ENCODE measurements at regions of chr10 and their contacts with region 1.

Region 1: DNA sequence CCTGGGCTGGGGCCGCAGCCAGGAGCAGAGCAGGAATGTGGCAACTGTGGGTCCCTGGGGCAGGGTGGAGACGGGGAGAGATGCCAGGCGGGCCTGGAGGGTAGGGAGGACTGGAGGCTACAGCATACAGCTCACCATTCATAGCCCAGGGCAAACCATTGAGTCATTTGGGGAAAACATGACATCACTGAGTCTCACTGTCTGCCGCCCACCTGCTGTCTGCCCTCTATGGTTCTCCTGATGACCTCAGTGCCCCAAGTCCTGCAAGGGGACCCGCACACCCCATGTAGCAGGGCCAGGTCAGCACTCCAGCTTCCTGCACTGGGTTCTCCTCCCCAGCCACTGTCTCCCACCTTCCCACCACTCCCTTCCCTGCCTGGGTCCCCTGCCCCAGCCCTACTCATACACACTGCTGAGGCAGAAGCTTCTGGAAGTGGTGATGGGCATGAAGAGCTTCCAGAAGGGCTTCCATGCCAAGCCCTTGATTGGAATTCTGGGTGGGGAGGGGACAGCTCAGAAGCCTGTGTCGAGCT is 10.4 kb downstream of the CHST3 start:
- DNase-seq: peak; percentile 81
- H3K4me3 Mint-ChIP-seq: peak overlapping the region; percentile 77
- H3K27ac Mint-ChIP-seq: peak overlapping the region; percentile 78
- H3K4me1 Mint-ChIP-seq: peaks cover 75% of the 10 kb centered on the region
- H3K27me3 Mint-ChIP-seq: no peaks in the 10 kb centered on the region
- CTCF ChIP-seq: no peak

Region 2: DNA sequence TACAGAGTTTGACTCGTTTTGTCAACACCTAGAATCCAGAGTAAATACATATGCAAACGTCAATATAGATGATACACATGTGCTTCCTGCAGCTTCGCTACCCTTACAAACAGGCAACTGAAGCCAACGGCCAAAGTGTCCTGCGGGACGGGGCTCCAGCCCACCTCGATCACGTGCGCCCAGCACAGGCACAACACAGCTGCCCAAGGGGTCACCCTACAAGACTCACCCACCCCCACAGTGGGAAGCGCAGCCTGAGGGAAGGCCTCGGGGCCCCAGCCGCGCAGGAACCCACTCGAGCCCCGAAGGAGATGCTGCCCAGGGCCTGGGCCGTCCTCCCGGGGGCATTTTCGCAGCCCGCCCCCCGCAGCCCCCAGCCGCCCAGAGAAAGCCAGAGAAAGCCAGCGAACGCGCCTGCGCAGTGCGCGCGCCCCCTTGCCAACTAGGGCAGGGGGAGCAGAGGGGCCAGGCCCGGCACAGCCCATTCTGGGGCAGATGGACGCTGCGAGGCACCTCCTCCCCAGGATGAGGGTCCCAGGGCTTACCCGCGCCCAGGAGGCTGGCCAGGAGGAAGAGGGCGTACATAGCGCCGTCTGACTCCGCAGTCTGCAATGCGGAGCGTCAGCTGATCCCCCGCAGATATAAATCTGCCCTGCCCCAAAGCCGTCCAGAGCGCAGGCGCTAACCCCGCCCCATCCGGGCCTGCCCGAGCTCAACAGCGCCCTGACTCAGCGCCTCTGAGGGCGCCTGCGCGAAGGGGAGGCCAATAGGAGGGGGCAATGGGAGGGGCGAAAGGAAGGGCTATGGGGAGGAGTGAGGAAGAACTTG is 123.7 kb before region 1 on chr10 and contains the start of gene PSAP:
- CTCF ChIA-PET with region 1: no interaction called
- POLR2A ChIA-PET with region 1: interaction called, 14 read pairs
- intact Hi-C with region 1: no loop called
- DNase-seq: peak; percentile 99
- H3K4me3 Mint-ChIP-seq: peak within 1 kb of the TSS; percentile 80
- H3K27ac Mint-ChIP-seq: peak within 1 kb of the TSS; percentile 94
- H3K4me1 Mint-ChIP-seq: peaks cover 42% of the 10 kb centered on the region
- H3K27me3 Mint-ChIP-seq: no peaks in the 10 kb centered on the region
- CTCF ChIP-seq: no peak
- total RNA-seq, gene PSAP: 506 and 692 TPM in 2 replicates

Region 3: GRCh38 chr10:71957546-71958275 is 16.8 kb before region 1 on chr10:
- CTCF ChIA-PET with region 1: interaction called, 21 read pairs
- POLR2A ChIA-PET with region 1: interaction called, 24 read pairs
- intact Hi-C with region 1: no loop called
- DNase-seq: no peak
- H3K4me3 Mint-ChIP-seq: no peak overlapping the region
- H3K27ac Mint-ChIP-seq: no peak overlapping the region
- H3K4me1 Mint-ChIP-seq: peaks cover 10% of the 10 kb centered on the region
- H3K27me3 Mint-ChIP-seq: no peaks in the 10 kb centered on the region
- CTCF ChIP-seq: no peak

Region 4: DNA sequence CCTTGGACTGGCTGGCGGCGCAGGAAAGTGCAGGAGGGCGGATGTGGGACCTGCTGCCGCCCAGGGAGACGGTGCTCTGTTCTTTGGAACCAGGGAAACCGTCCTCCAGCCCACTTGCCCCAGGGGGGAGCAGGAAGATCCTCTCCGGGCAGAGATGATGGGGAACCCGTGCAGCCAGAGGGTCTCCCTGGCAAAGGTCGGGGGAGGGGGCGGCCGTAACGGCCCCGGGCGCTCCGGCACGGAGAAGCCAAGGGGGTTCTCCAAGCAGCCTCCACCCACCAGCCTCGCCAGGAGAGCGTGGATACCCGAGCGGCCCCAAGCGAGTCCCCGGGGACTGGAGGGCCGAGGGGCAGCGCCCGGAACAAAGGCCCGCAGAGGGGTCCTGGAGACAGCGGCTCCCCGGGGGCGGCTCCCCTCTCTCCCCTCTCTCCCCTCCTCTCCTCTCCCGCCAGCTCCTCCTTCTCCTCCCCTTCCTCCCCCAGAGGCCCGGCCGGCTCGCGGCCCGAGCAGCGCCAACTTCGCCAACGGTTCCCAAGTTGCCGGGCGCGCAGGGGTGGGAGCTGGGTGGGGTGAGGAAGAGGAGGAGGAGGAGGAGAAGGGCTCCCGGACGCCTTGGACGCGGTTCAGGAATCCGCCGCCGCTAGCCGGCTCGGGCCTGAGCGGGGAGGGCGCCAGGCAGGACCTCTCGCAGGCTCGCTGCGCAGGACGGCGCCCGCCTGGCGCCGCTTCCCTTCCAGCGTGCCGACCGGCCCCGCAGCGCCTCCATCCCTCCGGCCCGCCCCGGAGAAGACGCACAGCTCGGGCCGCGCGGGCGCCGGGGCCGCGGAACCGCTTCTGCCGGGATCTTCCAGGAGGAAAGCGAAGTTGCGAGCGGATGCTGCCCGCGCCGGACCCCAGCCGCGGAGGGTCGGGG is 10.5 kb before region 1 on chr10 and contains the start of gene CHST3:
- CTCF ChIA-PET with region 1: interaction called, 4 read pairs
- POLR2A ChIA-PET with region 1: interaction called, 64 read pairs
- intact Hi-C with region 1: no loop called
- DNase-seq: peak; percentile 55
- H3K4me3 Mint-ChIP-seq: peak within 1 kb of the TSS; percentile 83
- H3K27ac Mint-ChIP-seq: peak within 1 kb of the TSS; percentile 81
- H3K4me1 Mint-ChIP-seq: peaks cover 33% of the 10 kb centered on the region
- H3K27me3 Mint-ChIP-seq: no peaks in the 10 kb centered on the region
- CTCF ChIP-seq: no peak
- total RNA-seq, gene CHST3: 28.7 and 29.3 TPM in 2 replicates

Region 5: GRCh38 chr10:71985542-71986250 is 11.1 kb after region 1 on chr10:
- CTCF ChIA-PET with region 1: interaction called, 3 read pairs
- POLR2A ChIA-PET with region 1: interaction called, 21 read pairs
- intact Hi-C with region 1: no loop called
- DNase-seq: no peak
- H3K4me3 Mint-ChIP-seq: no peak overlapping the region
- H3K27ac Mint-ChIP-seq: peak overlapping the region; percentile 65
- H3K4me1 Mint-ChIP-seq: peaks cover 40% of the 10 kb centered on the region
- H3K27me3 Mint-ChIP-seq: no peaks in the 10 kb centered on the region
- CTCF ChIP-seq: no peak

Region 6: GRCh38 chr10:71999360-72000072 is 25.0 kb after region 1 on chr10:
- CTCF ChIA-PET with region 1: interaction called, 6 read pairs
- POLR2A ChIA-PET with region 1: interaction called, 28 read pairs
- intact Hi-C with region 1: no loop called
- DNase-seq: peak; percentile 35
- H3K4me3 Mint-ChIP-seq: peak overlapping the region; percentile 48
- H3K27ac Mint-ChIP-seq: peak overlapping the region; percentile 82
- H3K4me1 Mint-ChIP-seq: peaks cover 44% of the 10 kb centered on the region
- H3K27me3 Mint-ChIP-seq: no peaks in the 10 kb centered on the region
- CTCF ChIP-seq: no peak

Region 7: DNA sequence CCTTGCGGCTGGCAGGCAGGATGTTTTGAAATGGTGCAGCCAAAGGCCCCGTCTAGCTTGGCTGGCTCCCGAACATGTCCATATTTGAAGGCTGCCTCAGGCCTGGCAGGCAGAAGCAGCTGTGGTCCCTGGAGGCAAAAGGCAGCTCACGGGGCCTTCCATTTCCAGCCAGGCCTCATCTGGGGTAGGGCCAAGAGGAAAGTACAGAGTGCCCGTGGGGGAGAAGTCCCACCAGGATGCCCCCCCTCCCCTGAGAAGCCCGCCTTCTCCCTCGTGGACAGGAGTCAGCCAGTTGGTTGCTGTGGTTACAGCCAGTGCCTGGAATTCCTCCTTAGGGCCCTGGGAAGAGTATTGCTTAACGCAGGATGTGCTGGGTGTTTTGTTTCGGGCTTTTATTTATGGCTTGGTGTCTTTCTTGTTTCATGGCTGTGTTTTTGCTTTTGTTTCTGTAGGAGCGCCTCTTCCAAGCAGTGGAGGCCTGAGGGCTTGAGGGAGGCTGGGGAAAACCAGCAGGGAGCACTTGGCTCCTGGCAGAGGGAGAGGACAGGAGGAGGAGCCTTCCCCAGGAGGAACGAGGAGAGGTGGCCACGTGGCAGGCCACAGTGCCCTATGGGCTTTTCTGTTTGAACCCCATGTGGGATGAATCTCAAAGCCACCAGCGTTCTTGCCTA is 35.0 kb after region 1 on chr10:
- CTCF ChIA-PET with region 1: interaction called, 8 read pairs
- POLR2A ChIA-PET with region 1: interaction called, 56 read pairs
- intact Hi-C with region 1: loop called (anchors 2 kb)
- DNase-seq: peak; percentile 98
- H3K4me3 Mint-ChIP-seq: peak overlapping the region; percentile 53
- H3K27ac Mint-ChIP-seq: peak overlapping the region; percentile 98
- H3K4me1 Mint-ChIP-seq: peaks cover 28% of the 10 kb centered on the region
- H3K27me3 Mint-ChIP-seq: no peaks in the 10 kb centered on the region
- CTCF ChIP-seq: no peak